SK-N-SH (cell line): ENCODE measurements at regions of chr19 and their contacts with region 1.

Region 1: DNA sequence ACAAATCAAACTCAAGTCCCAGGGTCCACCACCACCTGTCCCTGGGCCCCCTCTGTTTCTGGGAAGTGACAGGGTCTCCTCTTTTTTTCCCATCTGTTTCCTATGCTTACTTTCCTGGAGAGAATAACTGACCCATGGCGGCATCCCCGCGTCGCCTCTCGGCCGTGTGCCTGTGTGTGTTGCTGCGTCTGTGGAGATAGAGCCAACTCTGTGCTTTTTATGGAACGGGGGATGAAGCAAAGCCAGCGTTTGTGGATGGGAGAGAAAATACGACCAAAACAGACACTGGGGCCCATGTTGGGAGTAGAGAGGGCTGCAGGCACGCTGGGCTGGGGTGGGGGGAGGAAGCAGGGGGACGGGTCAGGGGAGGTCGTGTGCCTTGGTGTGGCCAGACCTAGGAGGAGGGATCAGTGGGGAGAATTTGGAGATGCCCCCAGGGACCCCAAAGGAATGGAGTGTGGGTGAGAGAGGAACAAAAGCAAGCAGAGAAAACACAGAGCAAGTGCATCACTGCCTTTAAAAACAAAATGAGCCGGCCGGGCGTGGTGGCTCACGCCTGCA is 16.6 kb downstream of the PLK5 start:
- DNase-seq: no peak
- H3K4me3 ChIP-seq: no peak overlapping the region
- H3K27ac ChIP-seq: no peak overlapping the region
- H3K4me1 ChIP-seq: peaks cover 0 to 5% of the 10 kb centered on the region in 2 experiments; a peak in 1 of 4 replicates
- H3K27me3 ChIP-seq: no peaks in the 10 kb centered on the region
- CTCF ChIP-seq: no peak
- EP300 ChIP-seq: no peak
- RAD21 ChIP-seq: no peak

Region 2: GRCh38 chr19:1492474-1493006 is 47.9 kb before region 1 on chr19:
- CTCF ChIA-PET with region 1: no interaction called
- POLR2A ChIA-PET with region 1: no interaction called
- DNase-seq: no peak
- H3K4me3 ChIP-seq: no peak overlapping the region
- H3K27ac ChIP-seq: no peak overlapping the region
- H3K4me1 ChIP-seq: peaks cover 5 to 18% of the 10 kb centered on the region in 2 experiments; a peak in 2 of 4 replicates
- H3K27me3 ChIP-seq: no peaks in the 10 kb centered on the region
- CTCF ChIP-seq: no peak
- EP300 ChIP-seq: no peak
- RAD21 ChIP-seq: no peak

Region 3: GRCh38 chr19:1551068-1552040 is 10.9 kb after region 1 on chr19:
- CTCF ChIA-PET with region 1: interaction called, 41 read pairs
- POLR2A ChIA-PET with region 1: no interaction called
- DNase-seq: no peak
- H3K4me3 ChIP-seq: no peak overlapping the region
- H3K27ac ChIP-seq: no peak overlapping the region
- H3K4me1 ChIP-seq: no peaks in the 10 kb centered on the region; a peak in 1 of 4 replicates
- H3K27me3 ChIP-seq: no peaks in the 10 kb centered on the region
- CTCF ChIP-seq: no peak
- EP300 ChIP-seq: no peak
- RAD21 ChIP-seq: no peak

Region 4: GRCh38 chr19:1577090-1577928 is 36.9 kb after region 1 on chr19:
- CTCF ChIA-PET with region 1: interaction called, 18 read pairs
- POLR2A ChIA-PET with region 1: no interaction called
- DNase-seq: no peak
- H3K4me3 ChIP-seq: no peak overlapping the region
- H3K27ac ChIP-seq: no peak overlapping the region
- H3K4me1 ChIP-seq: no peaks in the 10 kb centered on the region
- H3K27me3 ChIP-seq: no peaks in the 10 kb centered on the region
- CTCF ChIP-seq: no peak
- EP300 ChIP-seq: no peak
- RAD21 ChIP-seq: no peak

Region 5: DNA sequence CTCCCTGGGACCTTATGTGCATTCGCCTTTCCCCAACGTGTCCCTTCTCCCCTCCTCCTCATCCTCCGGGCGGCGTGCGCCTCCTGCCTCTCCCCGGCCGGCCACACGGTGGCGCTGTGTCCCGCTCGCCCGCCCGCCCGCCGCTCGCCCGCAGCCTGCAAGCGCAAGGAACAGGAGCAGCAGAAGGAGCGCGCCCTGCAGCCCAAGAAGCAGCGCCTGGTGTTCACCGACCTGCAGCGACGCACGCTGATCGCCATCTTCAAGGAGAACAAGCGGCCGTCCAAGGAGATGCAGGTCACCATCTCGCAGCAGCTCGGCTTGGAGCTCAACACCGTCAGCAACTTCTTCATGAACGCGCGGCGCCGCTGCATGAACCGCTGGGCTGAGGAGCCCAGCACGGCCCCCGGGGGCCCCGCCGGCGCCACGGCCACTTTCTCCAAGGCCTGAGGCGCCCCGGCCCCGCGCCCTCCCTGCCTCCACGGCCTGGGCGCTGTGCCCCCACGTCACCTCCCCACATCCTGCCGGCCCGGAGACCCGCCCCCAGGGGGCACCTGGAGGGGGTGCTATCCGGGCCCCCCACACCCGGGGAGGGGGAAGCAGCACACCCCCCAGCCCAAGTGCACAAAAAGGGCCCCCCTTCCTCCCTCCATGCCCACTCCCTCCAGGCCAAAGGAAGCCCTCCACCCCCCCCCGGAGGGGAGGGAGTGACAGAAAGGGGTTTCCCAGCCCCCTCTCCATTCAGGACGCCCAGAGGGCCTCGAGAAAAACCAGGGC is 234.7 kb after region 1 on chr19:
- CTCF ChIA-PET with region 1: interaction called, 17 read pairs
- POLR2A ChIA-PET with region 1: no interaction called
- DNase-seq: peak; percentile 72
- H3K4me3 ChIP-seq: no peak overlapping the region; a peak in 1 of 4 replicates
- H3K27ac ChIP-seq: no peak overlapping the region
- H3K4me1 ChIP-seq: no peaks in the 10 kb centered on the region
- H3K27me3 ChIP-seq: peaks cover 73% of the 10 kb centered on the region
- CTCF ChIP-seq: peak; percentile 50
- EP300 ChIP-seq: no peak
- RAD21 ChIP-seq: no peak